Activated CD4-positive, alpha-beta memory T cell treated with anti-CD3 and anti-CD28 coated beads for 36 hours (primary cell): ENCODE measurements at regions of chr4 and their contacts with region 1.

Region 1: GRCh38 chr4:121252224-121252806 is 88.2 kb upstream of the TNIP3 start:
- DNase-seq: peak; percentile 68
- H3K4me3 Mint-ChIP-seq: no peak overlapping the region
- H3K27ac Mint-ChIP-seq: no peak overlapping the region
- H3K4me1 Mint-ChIP-seq: peaks cover 70% of the 10 kb centered on the region
- H3K27me3 Mint-ChIP-seq: no peaks in the 10 kb centered on the region

Region 2: GRCh38 chr4:121139533-121140222 is 112.6 kb before region 1 on chr4:
- CTCF ChIA-PET with region 1: no interaction called
- POLR2A ChIA-PET with region 1: no interaction called
- intact Hi-C with region 1: loop called (anchors 1 kb)
- DNase-seq: no peak
- H3K4me3 Mint-ChIP-seq: no peak overlapping the region
- H3K27ac Mint-ChIP-seq: no peak overlapping the region
- H3K4me1 Mint-ChIP-seq: peaks cover 37% of the 10 kb centered on the region
- H3K27me3 Mint-ChIP-seq: no peaks in the 10 kb centered on the region

Region 3: GRCh38 chr4:121182296-121182695 is 70.0 kb before region 1 on chr4:
- CTCF ChIA-PET with region 1: interaction called, 3 read pairs
- POLR2A ChIA-PET with region 1: no interaction called
- intact Hi-C with region 1: loop called (anchors 1 kb)
- DNase-seq: no peak
- H3K4me3 Mint-ChIP-seq: peak overlapping the region; percentile 74
- H3K27ac Mint-ChIP-seq: peak overlapping the region; percentile 87
- H3K4me1 Mint-ChIP-seq: peaks cover 72% of the 10 kb centered on the region
- H3K27me3 Mint-ChIP-seq: no peaks in the 10 kb centered on the region

Region 4: GRCh38 chr4:121209171-121209570 is 43.1 kb before region 1 on chr4:
- CTCF ChIA-PET with region 1: no interaction called
- POLR2A ChIA-PET with region 1: no interaction called
- intact Hi-C with region 1: no loop called
- DNase-seq: no peak
- H3K4me3 Mint-ChIP-seq: no peak overlapping the region
- H3K27ac Mint-ChIP-seq: no peak overlapping the region
- H3K4me1 Mint-ChIP-seq: peaks cover 20% of the 10 kb centered on the region
- H3K27me3 Mint-ChIP-seq: no peaks in the 10 kb centered on the region

Region 5: DNA sequence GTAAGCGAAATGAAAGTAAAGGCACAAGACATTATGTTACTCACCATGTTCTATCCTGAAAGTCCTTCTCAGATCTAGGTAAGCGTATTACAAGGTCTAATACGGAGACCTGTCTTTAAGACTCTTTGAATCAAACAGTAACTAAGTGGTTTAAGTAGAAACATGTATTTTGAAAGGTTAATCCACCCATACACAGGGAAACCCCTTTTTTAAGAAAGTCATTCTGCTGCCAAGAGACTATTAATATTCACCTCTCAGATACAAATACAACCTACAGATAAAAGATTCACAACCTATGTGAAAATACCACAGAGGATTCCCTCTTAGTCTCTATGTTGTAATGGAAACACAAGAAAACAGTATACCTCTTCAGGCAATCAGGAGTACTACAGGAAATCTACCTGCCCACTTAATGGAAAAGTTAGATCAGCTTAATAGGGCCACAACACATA is 24.9 kb before region 1 on chr4:
- CTCF ChIA-PET with region 1: interaction called, 11 read pairs
- POLR2A ChIA-PET with region 1: interaction called, 3 read pairs
- intact Hi-C with region 1: loop called (anchors 1 kb)
- DNase-seq: no peak
- H3K4me3 Mint-ChIP-seq: peak overlapping the region; percentile 72
- H3K27ac Mint-ChIP-seq: peak overlapping the region; percentile 86
- H3K4me1 Mint-ChIP-seq: peaks cover 59% of the 10 kb centered on the region
- H3K27me3 Mint-ChIP-seq: no peaks in the 10 kb centered on the region

Region 6: GRCh38 chr4:121277624-121278023 is 25.3 kb after region 1 on chr4:
- CTCF ChIA-PET with region 1: interaction called, 19 read pairs
- POLR2A ChIA-PET with region 1: interaction called, 6 read pairs
- intact Hi-C with region 1: loop called (anchors 1 kb)
- DNase-seq: no peak
- H3K4me3 Mint-ChIP-seq: no peak overlapping the region
- H3K27ac Mint-ChIP-seq: no peak overlapping the region
- H3K4me1 Mint-ChIP-seq: peaks cover 28% of the 10 kb centered on the region
- H3K27me3 Mint-ChIP-seq: peaks cover 10% of the 10 kb centered on the region

Region 7: DNA sequence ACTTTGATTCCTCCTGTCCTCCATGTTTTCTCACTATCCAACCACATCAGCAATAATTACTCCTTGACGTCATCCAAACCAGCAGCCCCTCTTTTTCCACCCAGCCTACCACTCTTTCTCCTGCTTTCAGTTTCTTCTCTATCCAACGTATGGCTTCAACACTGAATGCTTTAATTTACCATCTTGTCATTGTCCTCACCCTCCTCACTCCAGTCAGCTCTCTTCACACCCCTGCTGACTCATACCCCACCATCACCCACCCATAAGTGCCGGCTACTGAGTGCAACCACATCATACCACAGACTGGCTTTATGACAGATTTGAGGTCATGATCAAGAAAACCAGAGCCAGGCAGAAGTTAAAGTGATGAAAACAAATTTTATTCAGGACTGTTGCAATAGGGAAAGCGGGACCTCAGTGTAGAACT is 454.3 kb after region 1 on chr4:
- CTCF ChIA-PET with region 1: no interaction called
- POLR2A ChIA-PET with region 1: no interaction called
- intact Hi-C with region 1: loop called (anchors 5 kb)
- DNase-seq: peak; percentile 83
- H3K4me3 Mint-ChIP-seq: no peak overlapping the region
- H3K27ac Mint-ChIP-seq: peak overlapping the region; percentile 59
- H3K4me1 Mint-ChIP-seq: peaks cover 38% of the 10 kb centered on the region
- H3K27me3 Mint-ChIP-seq: peaks cover 26% of the 10 kb centered on the region

Region 8: DNA sequence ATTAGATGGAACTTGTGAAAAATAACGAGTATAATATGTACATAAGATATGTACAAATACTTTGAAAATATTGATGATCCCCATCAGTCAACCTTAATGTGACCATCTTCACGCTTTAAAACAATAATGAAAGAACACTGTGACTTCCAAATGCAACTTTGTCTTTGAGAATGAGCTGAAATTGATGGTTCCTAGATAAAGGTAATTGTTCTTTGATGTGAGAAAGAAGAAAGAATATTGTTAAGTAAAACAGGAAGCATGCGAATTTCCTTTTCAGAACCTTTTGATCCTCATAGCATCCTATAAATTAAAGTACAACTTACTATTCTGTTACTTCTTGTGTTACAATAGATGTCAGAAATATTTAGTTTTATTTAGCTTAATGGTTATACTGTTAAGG is 1182.0 kb after region 1 on chr4:
- CTCF ChIA-PET with region 1: no interaction called
- POLR2A ChIA-PET with region 1: no interaction called
- intact Hi-C with region 1: no loop called
- DNase-seq: no peak
- H3K4me3 Mint-ChIP-seq: no peak overlapping the region
- H3K27ac Mint-ChIP-seq: no peak overlapping the region
- H3K4me1 Mint-ChIP-seq: peaks cover 26% of the 10 kb centered on the region
- H3K27me3 Mint-ChIP-seq: no peaks in the 10 kb centered on the region